ENCODE measurements at regions of chr16 and their contacts with region 1.

Region 1: DNA sequence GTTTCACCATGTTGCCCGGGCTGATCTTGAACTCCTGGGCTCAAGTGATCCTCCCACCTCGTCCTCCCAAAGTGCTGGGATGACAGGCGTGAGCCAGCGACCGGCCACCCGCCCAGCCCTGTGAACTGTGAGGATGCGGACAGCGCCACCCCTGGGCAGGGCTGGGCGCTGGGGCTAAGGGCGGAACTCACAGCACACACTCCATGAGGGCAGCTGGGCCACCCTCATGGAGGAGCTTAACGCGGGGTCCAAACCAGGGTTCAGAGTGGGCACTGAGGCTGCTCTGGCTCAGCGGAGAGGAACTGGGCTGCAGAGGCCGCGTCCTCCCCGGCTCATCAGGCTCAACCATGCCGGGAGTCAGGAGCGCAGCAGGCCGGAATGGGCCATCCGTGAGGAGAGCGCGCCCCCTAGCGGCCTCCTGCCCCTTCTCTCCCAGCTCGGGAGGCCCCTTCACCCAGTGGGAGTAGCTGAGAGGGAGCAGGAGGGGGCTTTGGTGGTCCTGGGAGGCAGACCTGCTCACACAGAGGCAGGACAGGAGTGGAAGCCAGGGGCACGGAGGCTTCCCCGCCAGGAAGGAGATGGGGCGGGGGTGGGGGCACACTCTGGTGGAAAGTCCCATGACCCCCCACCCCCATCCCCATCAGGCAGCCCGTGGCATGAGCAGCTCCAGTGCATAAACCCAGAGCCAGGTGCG is 13.8 kb downstream of the CORO7 start:
- H3K4me3 Mint-ChIP-seq: no peak overlapping the region
- H3K27ac Mint-ChIP-seq: no peak overlapping the region
- H3K4me1 Mint-ChIP-seq: peaks cover 51% of the 10 kb centered on the region
- H3K27me3 Mint-ChIP-seq: no peaks in the 10 kb centered on the region

Region 2: DNA sequence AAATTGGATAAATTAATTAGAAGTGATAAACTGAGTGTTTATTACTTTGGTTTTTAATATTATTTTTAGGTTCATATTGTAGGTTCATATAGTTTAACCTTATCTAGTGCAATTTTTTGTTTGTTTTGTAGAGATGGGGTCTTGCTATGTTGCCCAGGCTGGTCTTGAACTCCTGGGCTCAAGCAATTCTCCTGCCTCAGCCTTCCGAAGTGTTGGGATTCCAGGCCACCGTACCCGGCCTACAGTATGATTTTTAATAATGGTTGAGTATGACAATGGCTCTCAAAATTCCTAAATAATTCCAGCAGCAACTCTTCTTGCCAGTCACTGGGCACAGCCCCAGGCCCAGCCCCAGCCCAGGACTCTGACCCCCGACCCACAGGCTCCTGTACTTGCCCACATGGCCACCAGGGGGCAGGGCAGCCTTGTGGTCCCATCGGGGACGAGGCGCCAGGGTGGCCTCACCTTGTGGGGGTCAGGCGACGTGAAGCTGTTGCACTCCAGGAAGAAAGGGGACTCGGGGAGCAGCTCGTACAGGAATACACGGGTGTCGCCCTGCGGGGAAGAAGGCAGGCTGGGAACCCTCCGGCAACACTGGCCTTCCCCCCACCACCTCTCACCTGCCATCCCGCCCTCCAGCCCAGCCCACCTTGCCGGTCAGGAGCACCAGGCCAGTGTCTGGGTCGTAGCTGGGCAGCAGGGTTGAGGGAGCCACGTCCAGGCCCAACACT is 43.6 kb before region 1 on chr16:
- intact Hi-C with region 1: loop called (anchors 5 kb)
- H3K4me3 Mint-ChIP-seq: no peak overlapping the region
- H3K27ac Mint-ChIP-seq: no peak overlapping the region
- H3K4me1 Mint-ChIP-seq: peaks cover 8% of the 10 kb centered on the region
- H3K27me3 Mint-ChIP-seq: no peaks in the 10 kb centered on the region